Sigmoid colon (tissue), 7 donors: ENCODE measurements at regions of chr2 and their contacts with region 1.

Region 1: DNA sequence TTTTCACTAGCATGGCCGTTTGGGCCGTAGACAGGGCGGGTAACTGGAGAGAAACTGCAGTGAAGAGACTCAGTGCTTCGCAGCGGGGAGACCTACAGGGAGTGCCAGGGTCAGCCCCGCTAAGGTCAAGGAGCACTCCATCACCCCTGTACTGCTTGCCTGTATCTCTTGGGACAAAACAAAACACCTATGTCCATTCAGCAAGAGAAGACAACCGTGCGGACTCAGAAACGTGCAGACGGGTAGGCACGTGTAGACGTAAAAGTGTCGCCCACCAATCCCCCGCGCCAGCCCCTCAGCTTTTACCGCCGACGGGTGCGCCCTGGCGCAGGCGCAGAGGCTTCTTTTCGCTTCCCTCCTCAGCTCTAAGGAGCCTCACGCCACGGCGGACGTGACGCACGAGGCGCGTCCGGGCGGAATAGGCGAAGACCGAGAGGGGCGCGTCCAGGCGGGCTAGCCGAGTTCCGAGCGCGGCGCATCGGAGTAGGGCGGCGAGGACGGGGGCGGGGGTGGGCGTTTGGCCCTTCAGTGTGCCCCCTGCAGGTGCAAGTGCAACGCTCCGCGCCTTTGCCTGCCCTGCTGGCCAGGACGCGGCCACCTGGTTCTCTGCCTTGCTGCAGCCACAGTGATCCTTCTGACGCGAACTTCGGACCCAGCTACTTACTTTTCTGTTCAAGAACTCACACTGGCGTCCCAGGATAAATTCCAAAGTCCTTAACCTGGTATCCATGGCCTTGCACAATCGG is 3.3 kb upstream of the SOS1 start:
- DNase-seq: peak; percentile 97
- H3K4me3 ChIP-seq: peak overlapping the region; percentile 57 to 73 (median 64)
- H3K27ac ChIP-seq: peak overlapping the region; percentile 91 to 97 (median 96)
- H3K4me1 ChIP-seq: peaks cover 0 to 33% (median 25%) of the 10 kb centered on the region in 4 donors
- H3K27me3 ChIP-seq: no peaks in the 10 kb centered on the region
- CTCF ChIP-seq: peak in 2 of 4 experiments; percentile 23 to 53
- EP300 ChIP-seq: peak in 1 of 4 donors; percentile 78
- POLR2A ChIP-seq: peak; percentile 83 to 91

Region 2: DNA sequence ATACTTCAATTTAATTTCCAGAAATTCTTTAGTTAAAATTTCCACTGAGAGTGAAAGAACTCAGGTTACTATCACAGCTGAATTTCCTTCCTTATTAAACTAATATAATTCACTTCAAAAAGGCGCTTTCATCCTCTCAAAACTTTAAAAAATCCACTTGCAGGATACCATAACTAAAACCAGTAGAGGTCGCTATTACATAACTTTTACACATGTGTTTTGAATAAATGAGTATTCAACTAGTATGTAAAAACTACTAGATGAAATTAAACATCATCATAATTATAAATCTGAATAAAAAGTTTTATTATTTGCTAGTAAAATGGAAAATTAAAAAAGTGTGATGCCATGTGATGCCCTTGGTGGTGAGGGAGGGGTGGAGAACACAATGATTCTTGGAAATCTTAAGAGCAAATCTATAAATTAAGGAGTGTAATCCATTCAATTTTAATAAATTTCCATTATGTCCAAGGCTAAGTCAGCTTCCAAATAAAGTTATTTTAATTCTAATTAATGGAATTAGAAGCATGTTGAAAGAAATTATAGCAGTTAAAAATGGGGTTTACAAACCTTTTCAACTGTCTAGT is 64.7 kb before region 1 on chr2:
- intact Hi-C with region 1: loop called (anchors 5 kb)
- DNase-seq: no peak
- H3K4me3 ChIP-seq: no peak overlapping the region
- H3K27ac ChIP-seq: no peak overlapping the region
- H3K4me1 ChIP-seq: peaks cover 0 to 12% (median 0%) of the 10 kb centered on the region in 4 donors
- H3K27me3 ChIP-seq: no peaks in the 10 kb centered on the region
- CTCF ChIP-seq: peak in 3 of 4 experiments; percentile 28 to 68 (median 55)
- EP300 ChIP-seq: no peak
- POLR2A ChIP-seq: no peak

Region 3: GRCh38 chr2:39160982-39161381 is 36.8 kb after region 1 on chr2:
- intact Hi-C with region 1: no loop called
- DNase-seq: no peak
- H3K4me3 ChIP-seq: no peak overlapping the region
- H3K27ac ChIP-seq: no peak overlapping the region
- H3K4me1 ChIP-seq: peaks cover 0 to 13% (median 10%) of the 10 kb centered on the region in 4 donors
- H3K27me3 ChIP-seq: no peaks in the 10 kb centered on the region
- CTCF ChIP-seq: no peak
- EP300 ChIP-seq: no peak
- POLR2A ChIP-seq: no peak